Thyroid gland (tissue), 4 donors: ENCODE measurements at regions of chr3 and their contacts with region 1.

Region 1: DNA sequence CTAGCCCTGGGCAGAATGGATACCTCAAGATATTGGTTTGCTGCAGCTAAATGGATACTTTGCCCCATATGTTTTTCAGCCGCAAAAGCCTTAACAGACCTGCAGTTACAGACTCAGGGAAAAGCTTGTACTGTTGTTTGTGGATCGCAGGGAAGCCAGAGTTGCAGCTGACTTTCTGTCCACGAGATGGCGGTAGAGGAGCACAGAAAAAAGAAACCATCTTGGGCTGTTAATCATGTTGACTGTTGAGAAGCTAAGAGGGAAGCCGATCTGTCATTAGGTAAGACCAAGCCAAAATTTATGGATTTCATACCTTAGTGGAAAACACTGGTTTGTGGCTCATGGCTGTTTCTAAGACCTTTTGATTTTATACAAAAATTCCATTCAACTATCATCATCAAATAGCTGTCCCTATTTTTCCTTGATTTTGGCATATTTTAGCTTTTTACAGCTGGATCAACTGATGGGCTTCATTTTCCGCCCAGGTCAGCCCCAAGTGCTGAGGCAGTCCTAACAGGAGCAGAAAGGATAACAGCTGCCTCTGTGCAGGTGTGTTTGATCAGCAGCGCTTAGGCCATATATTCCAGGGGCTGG is 205.7 kb upstream of the ZPLD1 start:
- DNase-seq: peak; percentile 69 to 71
- H3K4me3 ChIP-seq: no peak overlapping the region
- H3K27ac ChIP-seq: no peak overlapping the region
- H3K4me1 ChIP-seq: no peaks in the 10 kb centered on the region
- H3K27me3 ChIP-seq: no peaks in the 10 kb centered on the region
- CTCF ChIP-seq: peak; percentile 76 to 90 (median 88)
- POLR2A ChIP-seq: no peak

Region 2: DNA sequence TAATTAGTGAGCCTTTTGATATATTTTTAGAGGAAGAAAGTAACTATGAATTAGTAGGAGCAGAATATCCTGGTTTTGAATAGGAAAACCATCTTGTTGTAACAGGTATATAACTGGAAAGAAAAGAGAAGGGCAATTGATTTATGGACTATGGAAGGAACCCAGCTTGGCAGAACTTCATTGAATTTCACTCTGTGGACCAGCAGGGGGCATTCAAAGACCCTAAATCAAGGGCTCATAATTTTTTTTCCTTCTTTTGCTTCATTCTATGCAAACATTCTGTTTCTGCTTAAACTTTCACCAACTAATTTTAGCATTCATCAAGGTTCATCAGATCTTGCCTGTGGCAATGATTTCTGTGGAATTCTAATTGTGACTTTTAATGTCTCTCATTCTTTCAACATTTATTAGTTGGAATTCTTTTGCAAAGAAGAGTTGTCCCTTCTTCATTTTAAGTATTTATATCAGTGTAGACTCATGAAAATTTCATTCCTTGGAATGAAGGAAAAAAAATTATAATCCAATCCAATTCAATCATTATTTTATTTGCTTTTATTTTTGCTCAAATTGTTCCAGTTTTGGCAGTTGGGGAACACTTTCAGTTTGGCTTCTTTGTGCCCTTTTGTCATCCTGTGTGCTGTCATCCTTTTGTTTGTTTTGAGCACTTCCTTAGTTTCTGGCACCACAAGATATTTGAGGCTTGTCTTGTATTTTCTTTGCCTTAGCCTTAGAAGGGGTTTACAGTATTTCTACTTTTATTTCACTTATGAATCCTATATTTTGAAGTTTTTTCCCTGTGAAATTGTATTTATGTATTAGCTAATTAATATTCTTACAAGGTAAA is 419.8 kb before region 1 on chr3:
- intact Hi-C with region 1: loop called (anchors 5 kb)
- DNase-seq: peak; percentile 34 to 35
- H3K4me3 ChIP-seq: no peak overlapping the region
- H3K27ac ChIP-seq: peak overlapping the region; percentile 56 to 74 (median 62)
- H3K4me1 ChIP-seq: peaks cover 19 to 20% of the 10 kb centered on the region in 2 donors
- H3K27me3 ChIP-seq: no peaks in the 10 kb centered on the region
- CTCF ChIP-seq: peak in 5 of 6 experiments; percentile 34 to 84 (median 68)
- POLR2A ChIP-seq: no peak

Region 3: DNA sequence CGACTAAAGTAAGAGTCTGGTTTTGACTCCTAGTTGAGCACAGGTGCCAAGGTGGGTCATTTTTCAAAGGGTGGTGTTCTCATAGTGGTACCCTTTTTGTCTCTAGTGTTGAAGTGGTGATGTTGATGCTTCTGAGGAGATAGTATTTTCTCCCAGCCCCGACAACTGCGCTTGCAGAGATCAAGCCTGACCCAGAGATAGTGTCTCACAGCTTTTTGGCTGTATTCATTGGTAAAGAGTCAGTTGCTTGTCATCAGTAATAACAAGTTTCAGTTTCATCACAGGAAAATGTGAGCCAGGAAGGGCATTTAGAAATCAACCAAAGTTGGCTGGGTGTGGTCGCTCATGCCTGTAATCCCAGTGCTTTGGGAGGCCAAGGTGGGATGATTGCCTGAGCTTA is 240.6 kb before region 1 on chr3:
- intact Hi-C with region 1: no loop called
- DNase-seq: no peak
- H3K4me3 ChIP-seq: no peak overlapping the region
- H3K27ac ChIP-seq: no peak overlapping the region
- H3K4me1 ChIP-seq: peaks cover 5 to 6% of the 10 kb centered on the region in 2 donors
- H3K27me3 ChIP-seq: no peaks in the 10 kb centered on the region
- CTCF ChIP-seq: no peak
- POLR2A ChIP-seq: no peak

Region 4: GRCh38 chr3:102536456-102536855 is 307.3 kb after region 1 on chr3:
- intact Hi-C with region 1: loop called (anchors 10 kb)
- DNase-seq: peak; percentile 12 to 13
- H3K4me3 ChIP-seq: no peak overlapping the region
- H3K27ac ChIP-seq: no peak overlapping the region
- H3K4me1 ChIP-seq: peaks cover 6 to 7% of the 10 kb centered on the region in 2 donors
- H3K27me3 ChIP-seq: no peaks in the 10 kb centered on the region
- CTCF ChIP-seq: peak in 3 of 6 experiments; percentile 42 to 60 (median 52)
- POLR2A ChIP-seq: no peak